ENCODE measurements at regions of chr9 and their contacts with region 1.

Region 1: DNA sequence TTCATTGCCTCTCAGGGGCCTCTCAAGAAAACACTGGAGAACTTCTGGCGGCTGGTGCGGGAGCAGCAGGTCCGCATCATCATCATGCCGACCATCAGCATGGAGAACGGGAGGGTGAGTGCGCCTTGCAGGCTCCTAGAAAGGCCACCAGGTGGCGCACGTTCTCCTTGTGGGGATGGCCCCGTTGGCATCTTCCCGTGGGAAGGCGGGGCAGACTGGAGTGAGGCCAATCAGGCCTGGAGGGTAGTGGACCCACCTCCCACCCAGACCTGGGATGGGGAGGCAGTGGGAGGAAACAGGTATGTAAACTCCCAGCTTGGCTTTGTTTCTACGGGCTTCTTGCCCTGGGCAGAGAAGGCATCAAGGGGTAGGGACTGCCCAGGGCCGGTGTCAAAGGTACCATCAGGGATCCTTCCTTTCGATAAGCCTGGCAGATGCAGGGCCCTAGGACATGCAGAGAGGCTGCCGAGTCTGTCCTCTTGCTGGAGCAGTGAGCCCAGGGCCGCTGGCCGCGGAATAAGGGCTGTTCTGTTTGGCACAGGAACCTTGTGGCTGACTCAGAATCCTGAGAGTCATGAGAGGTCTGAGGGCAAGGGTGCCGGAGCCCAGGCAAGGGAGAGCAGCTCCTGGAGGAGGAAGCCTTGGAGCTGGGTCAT is 18.9 kb upstream of the SPTLC1 start:
- DNase-seq: peak; percentile 82 to 86
- H3K4me3 ChIP-seq: peak overlapping the region in 1 of 4 donors; percentile 15
- H3K27ac ChIP-seq: peak overlapping the region in 1 of 5 donors; percentile 55
- H3K4me1 ChIP-seq: peaks cover 9 to 18% (median 16%) of the 10 kb centered on the region in 4 donors
- H3K27me3 ChIP-seq: peaks cover 0 to 32% (median 0%) of the 10 kb centered on the region in 3 donors
- CTCF ChIP-seq: peak in 5 of 7 experiments; percentile 72 to 95 (median 91)
- EP300 ChIP-seq: no peak
- POLR2A ChIP-seq: no peak

Region 2: DNA sequence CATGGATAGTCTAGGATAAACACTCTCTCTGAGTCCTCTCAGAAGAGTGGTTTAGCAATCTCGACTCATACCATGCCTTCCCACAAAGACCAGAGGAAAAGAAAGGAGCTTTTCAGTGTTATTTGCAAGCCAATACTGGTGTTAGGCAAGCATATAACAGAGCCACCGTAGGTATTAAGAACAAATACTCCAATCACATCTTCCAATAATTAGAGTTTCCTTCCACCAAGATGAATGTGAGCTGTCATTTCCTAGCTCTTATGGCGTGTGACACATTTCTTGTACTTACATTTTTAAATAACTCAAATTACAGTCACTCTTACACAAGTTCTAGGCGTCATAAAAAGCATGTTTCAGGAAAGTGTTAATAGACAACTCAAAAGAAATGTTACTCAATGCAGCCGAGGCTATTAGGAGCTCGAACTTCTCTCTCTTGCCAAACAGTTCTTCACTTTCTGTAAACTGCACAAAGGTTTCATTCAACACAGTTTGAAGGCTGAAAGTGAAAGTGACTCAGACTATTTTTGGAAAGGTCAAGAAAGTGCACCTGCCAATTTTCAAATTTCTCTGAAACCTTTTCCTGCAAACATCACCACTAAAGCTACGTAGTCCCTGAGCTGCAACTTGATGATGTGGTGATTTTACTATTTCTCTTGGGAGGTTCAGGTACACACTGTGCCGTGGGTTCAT is 926.2 kb before region 1 on chr9:
- intact Hi-C with region 1: no loop called
- DNase-seq: peak in 1 of 2 donors; percentile 78
- H3K4me3 ChIP-seq: peak overlapping the region in 1 of 4 donors; percentile 7
- H3K27ac ChIP-seq: peak overlapping the region; percentile 78 to 90 (median 89)
- H3K4me1 ChIP-seq: peaks cover 22 to 44% (median 32%) of the 10 kb centered on the region in 4 donors
- H3K27me3 ChIP-seq: no peaks in the 10 kb centered on the region
- CTCF ChIP-seq: no peak
- EP300 ChIP-seq: peak; percentile 23
- POLR2A ChIP-seq: no peak

Region 3: DNA sequence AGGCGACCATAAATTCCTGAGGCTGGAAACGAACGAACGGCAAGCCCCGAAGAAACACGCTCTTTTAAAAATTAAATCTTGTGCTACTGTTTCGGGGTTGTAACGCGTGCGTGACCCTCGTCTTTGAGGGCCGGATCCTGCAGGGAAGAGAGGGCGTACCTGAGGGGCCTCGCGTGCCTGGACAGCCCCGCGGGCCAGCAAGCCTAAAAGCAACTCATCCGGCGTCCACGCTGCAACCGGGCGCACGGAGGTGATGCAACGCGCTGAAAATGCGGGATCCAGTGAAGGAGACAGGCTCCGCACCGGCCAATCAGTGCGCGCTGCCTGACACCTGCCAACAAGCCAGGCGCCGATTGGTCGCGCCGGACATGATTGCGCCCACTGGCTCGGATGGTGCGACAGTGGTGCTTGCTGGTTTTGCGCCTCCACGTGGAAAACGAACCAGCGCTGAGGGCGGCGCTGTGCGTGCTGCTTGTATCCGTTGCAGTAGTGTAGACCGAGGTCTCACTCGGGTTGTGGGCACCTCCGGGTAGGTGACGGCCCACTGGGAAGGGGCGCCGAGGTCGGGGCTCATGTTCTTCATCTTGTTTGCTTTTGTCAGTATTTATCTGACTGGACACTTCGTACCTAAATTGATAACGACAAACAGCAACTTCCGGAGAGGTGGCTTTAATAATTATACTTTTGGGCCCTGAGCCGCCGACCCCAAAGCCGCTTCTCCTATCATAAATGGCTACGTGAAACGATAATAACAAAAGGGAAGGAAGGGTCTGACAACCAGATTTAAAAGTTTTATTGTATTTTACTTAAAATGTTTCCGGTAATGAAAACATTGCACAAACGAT is 159.6 kb after region 1 on chr9 and contains the start of gene IARS1:
- intact Hi-C with region 1: loop called (anchors 10 kb)
- DNase-seq: peak; percentile 99
- H3K4me3 ChIP-seq: peak within 1 kb of the TSS; percentile 69 to 86 (median 72)
- H3K27ac ChIP-seq: peak within 1 kb of the TSS; percentile 83 to 88 (median 87)
- H3K4me1 ChIP-seq: peaks cover 22 to 45% (median 39%) of the 10 kb centered on the region in 4 donors
- H3K27me3 ChIP-seq: no peaks in the 10 kb centered on the region
- CTCF ChIP-seq: peak in 3 of 7 experiments; percentile 8 to 21 (median 18)
- EP300 ChIP-seq: no peak
- POLR2A ChIP-seq: peak in 2 of 4 donors; percentile 14 to 43
- total RNA-seq, gene IARS1: 59.5 to 328 (median 118) TPM

Region 4: GRCh38 chr9:92634712-92635605 is 500.9 kb after region 1 on chr9:
- intact Hi-C with region 1: loop called (anchors 5 kb)
- DNase-seq: peak; percentile 74 to 92
- H3K4me3 ChIP-seq: no peak overlapping the region
- H3K27ac ChIP-seq: peak overlapping the region in 2 of 5 donors; percentile 20 to 39
- H3K4me1 ChIP-seq: peaks cover 0 to 13% (median 4%) of the 10 kb centered on the region in 4 donors
- H3K27me3 ChIP-seq: no peaks in the 10 kb centered on the region
- CTCF ChIP-seq: peak in 5 of 7 experiments; percentile 80 to 91 (median 84)
- EP300 ChIP-seq: no peak
- POLR2A ChIP-seq: no peak

Measured in stomach (tissue), 19 donors.